IMR-90 (cell line): ENCODE measurements at regions of chr6 and their contacts with region 1.

Region 1: DNA sequence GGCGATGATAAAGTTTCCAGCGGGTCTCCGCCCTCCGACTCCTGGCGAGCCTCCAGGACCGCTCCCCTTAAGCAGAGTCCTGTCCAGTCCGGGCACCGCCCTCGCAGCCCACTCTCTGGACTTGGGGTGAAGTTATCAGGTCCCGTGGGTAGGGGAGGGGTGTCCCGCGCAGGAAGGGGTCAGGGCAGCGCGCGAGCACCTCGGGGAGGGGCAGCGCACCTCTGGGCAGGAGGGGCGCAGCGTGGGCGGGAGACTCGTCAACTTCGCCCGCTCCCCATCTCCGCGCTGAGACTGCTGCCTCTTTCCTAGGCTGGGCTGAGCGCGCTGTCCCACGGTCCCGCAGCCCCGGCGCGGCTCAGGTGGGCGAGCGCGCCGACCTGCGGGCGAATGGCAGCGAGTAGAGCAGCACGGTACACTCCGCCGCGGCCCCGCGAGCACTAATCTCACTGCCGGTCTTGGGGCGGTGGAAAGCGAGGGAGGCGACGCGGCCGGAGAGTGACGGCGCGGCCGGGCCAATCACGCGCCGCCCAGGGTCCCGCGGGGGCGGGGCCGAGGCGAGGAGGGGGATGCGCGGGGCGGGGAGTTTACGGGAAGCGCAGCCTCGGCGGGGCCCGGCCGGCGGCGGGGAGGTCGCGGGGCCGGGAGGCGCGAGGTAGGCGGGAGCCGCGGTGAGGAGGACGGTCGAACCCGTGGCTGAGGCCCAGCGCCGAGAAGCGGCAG is at the start of gene MAN1A1:
- DNase-seq: peak; percentile 66
- ATAC-seq: peak; percentile 94
- H3K4me3 ChIP-seq: peak within 1 kb of the TSS; percentile 98
- H3K27ac ChIP-seq: peak within 1 kb of the TSS; percentile 75
- H3K4me1 ChIP-seq: peaks cover 5% of the 10 kb centered on the region; the same call in 1 of the 2 replicates
- H3K27me3 ChIP-seq: no peaks in the 10 kb centered on the region
- CTCF ChIP-seq: no peak
- POLR2A ChIP-seq: peak; percentile 57; the same call in 1 of the 2 replicates
- RAD21 ChIP-seq: no peak
- total RNA-seq, gene MAN1A1: 5.9 and 11.4 TPM in 2 replicates

Region 2: DNA sequence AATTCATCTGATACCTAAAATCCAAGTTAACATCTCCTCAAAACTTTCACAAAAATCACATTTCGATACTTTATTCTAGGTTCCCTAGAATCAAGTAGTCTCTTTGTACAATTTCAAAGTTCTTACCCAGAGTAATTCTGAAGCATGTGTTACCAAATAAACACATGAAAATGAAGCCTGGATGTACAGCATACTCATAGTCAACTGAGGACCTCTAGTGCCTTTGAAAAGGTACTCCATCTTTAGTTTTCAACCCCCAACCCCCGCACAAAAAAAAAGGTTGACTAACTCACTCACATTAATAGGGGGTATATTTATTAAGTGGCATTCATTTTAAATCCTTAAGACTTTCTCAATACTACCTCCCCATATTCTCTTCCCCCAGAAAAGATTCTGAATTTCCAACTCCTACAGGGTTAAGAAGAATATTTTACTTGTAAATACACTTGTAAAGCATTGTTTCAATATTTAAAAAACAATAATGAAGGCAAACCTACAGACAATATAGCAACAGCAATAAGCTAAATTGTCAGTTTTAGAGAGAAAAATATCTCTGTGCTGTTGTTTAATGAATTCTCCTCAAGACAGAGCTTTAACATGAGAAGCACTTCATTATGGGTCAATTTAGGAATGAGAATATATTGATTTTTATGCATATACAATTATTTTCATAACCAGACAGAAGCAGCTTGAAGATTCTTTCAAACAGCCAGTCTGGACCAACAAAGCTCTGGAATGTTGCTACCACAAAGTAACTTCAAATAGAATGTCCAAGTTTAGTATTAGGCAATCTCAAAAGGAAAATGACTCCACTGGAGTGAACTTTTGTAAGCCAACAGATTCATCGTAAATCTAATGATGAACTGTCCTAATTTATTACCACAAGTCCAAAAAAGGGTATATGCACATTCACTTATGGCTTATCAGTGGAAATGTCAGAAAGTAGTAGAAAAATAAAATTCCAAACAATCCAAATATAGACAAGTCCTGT is 798.1 kb before region 1 on chr6:
- CTCF ChIA-PET with region 1: no interaction called
- POLR2A ChIA-PET with region 1: no interaction called
- dilution Hi-C with region 1: no loop called
- in situ Hi-C with region 1: no loop called
- intact Hi-C with region 1: no loop called
- DNase-seq: peak; percentile 79
- ATAC-seq: peak; percentile 84
- H3K4me3 ChIP-seq: no peak overlapping the region
- H3K27ac ChIP-seq: no peak overlapping the region
- H3K4me1 ChIP-seq: peaks cover 3% of the 10 kb centered on the region
- H3K27me3 ChIP-seq: no peaks in the 10 kb centered on the region
- CTCF ChIP-seq: peak; percentile 80
- POLR2A ChIP-seq: no peak
- RAD21 ChIP-seq: peak; percentile 81

Region 3: DNA sequence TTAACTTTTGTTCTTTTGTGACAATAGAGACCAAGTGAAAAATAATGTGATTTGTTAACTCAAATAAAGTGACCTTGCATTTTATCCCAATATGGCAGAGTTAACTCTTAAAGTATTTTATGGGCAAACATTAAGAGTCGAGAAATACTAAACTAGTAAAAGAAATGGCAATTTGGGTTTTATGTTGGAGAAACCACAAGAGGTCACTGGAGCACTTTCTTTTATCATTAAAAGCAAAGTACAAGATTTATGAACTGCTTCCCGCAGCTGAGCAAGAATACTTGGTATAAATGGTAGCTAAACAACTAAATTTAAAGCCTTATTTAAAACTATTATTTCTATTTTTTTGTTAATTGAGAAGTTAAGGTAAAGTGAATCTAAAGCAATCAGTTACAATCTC is 381.1 kb before region 1 on chr6:
- CTCF ChIA-PET with region 1: no interaction called
- POLR2A ChIA-PET with region 1: no interaction called
- dilution Hi-C with region 1: no loop called
- in situ Hi-C with region 1: no loop called
- intact Hi-C with region 1: loop called (anchors 5 kb)
- DNase-seq: peak; percentile 1
- ATAC-seq: no peak
- H3K4me3 ChIP-seq: no peak overlapping the region
- H3K27ac ChIP-seq: no peak overlapping the region
- H3K4me1 ChIP-seq: no peaks in the 10 kb centered on the region
- H3K27me3 ChIP-seq: no peaks in the 10 kb centered on the region
- CTCF ChIP-seq: peak; percentile 14; the same call in 1 of the 2 replicates
- POLR2A ChIP-seq: no peak
- RAD21 ChIP-seq: no peak

Region 4: DNA sequence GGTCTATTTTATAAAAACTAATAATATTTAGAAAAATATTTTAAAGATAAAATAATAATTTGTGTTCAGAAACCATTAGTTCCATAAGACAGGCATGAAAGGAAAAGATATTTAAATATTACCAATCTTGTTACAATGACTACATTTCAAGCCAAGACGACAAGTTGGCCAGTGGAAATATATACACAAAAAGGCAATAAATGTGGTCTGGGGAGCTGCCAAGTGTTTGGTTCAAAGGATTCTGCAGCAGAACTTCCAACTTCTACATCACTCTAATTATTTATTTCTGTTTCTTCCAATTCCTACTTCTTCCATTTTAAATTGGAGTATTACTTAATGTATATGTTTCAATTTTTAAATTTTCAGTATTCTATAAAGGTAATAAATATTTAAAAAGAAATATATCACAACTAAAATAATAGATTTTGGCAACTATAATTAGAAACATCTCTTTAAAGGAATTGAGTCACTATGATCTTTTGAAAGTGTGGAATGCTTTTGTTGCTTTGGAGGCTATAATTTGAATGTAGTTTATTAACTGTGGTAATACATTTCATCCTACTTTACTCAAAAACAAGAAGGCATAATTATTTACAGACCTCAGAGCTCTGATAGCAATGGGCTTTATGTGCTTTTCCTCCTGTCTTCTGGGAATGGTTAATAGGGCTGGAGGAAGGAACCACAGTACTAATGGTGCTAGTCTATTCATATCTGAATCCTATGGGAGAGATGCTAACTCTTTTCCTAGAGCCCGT is 141.3 kb before region 1 on chr6:
- CTCF ChIA-PET with region 1: no interaction called
- POLR2A ChIA-PET with region 1: no interaction called
- dilution Hi-C with region 1: no loop called
- in situ Hi-C with region 1: no loop called
- intact Hi-C with region 1: loop called (anchors 1 kb)
- DNase-seq: peak; percentile 66
- ATAC-seq: no peak
- H3K4me3 ChIP-seq: no peak overlapping the region
- H3K27ac ChIP-seq: no peak overlapping the region
- H3K4me1 ChIP-seq: peaks cover 3% of the 10 kb centered on the region; the same call in 1 of the 2 replicates
- H3K27me3 ChIP-seq: no peaks in the 10 kb centered on the region
- CTCF ChIP-seq: no peak
- POLR2A ChIP-seq: no peak
- RAD21 ChIP-seq: no peak

Region 5: GRCh38 chr6:119280668-119281067 is 68.8 kb before region 1 on chr6:
- CTCF ChIA-PET with region 1: no interaction called
- POLR2A ChIA-PET with region 1: no interaction called
- dilution Hi-C with region 1: no loop called
- in situ Hi-C with region 1: no loop called
- intact Hi-C with region 1: no loop called
- DNase-seq: no peak
- ATAC-seq: no peak
- H3K4me3 ChIP-seq: no peak overlapping the region
- H3K27ac ChIP-seq: no peak overlapping the region
- H3K4me1 ChIP-seq: no peaks in the 10 kb centered on the region; the same call in 1 of the 2 replicates
- H3K27me3 ChIP-seq: no peaks in the 10 kb centered on the region
- CTCF ChIP-seq: no peak
- POLR2A ChIP-seq: no peak
- RAD21 ChIP-seq: no peak

Region 6: GRCh38 chr6:119463081-119463626 is 113.7 kb after region 1 on chr6:
- CTCF ChIA-PET with region 1: no interaction called
- POLR2A ChIA-PET with region 1: no interaction called
- dilution Hi-C with region 1: no loop called
- in situ Hi-C with region 1: no loop called
- intact Hi-C with region 1: no loop called
- DNase-seq: no peak
- ATAC-seq: no peak
- H3K4me3 ChIP-seq: no peak overlapping the region
- H3K27ac ChIP-seq: no peak overlapping the region
- H3K4me1 ChIP-seq: no peaks in the 10 kb centered on the region
- H3K27me3 ChIP-seq: no peaks in the 10 kb centered on the region
- CTCF ChIP-seq: no peak
- POLR2A ChIP-seq: no peak
- RAD21 ChIP-seq: no peak

Region 7: DNA sequence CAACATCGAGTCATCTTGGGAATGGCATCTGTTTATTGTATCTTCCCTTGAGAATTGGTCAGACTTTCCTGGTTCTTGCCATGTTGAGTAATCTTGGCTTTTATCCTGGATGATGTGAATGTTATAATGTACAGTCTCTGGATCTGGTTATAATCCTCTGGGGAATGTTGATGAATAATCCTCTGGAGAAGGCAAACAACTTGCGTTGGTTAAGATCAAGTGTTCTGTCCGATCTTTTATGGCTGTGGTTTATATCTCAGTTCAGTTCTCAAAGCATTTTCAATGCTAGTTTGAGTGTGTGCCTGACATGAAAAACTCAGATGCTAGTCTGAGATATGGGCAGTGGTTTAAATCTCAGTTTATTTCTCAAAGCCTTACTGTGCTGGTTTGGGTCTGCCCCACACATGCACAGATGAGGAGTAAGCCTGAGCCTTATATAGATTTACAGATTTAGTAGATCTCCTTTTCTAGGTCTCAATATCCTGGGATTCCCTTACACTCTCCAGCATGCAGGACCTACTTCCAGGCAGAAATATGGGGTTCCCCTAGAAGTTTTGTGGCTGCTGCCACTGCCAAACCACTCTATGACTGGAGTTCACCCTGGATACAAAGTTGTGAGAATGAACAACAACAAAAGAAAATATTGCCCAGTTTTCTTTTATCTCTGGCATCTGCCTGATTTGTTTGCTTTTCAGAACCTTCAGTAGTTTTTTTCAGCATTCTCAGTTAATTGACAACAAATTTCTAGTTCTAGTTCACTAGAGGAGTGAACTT is 191.8 kb after region 1 on chr6:
- CTCF ChIA-PET with region 1: no interaction called
- POLR2A ChIA-PET with region 1: no interaction called
- dilution Hi-C with region 1: no loop called
- in situ Hi-C with region 1: no loop called
- intact Hi-C with region 1: loop called (anchors 5 kb)
- DNase-seq: peak; percentile 100
- ATAC-seq: peak; percentile 93
- H3K4me3 ChIP-seq: no peak overlapping the region
- H3K27ac ChIP-seq: peak overlapping the region; percentile 85
- H3K4me1 ChIP-seq: peaks cover 14% of the 10 kb centered on the region
- H3K27me3 ChIP-seq: no peaks in the 10 kb centered on the region
- CTCF ChIP-seq: no peak
- POLR2A ChIP-seq: no peak
- RAD21 ChIP-seq: no peak

Region 8: DNA sequence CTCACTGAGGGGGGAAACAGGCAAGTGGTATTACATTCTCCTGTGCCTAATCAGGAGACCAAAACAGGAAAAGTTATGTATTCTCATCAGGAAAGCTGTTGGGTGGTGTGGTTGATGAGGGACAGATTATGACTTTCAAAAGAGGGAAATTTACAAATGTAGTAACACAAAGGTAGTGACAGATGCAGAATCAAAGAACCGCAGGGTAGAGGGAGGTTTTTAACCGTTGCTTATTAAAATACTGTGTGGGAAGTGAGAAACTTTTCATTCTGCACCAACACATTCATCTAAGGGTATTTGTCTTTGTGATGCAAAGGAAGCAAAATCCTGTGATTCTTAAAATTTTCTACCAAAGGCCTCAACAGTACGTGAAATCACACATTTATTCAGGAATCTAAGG is 288.3 kb after region 1 on chr6:
- CTCF ChIA-PET with region 1: no interaction called
- POLR2A ChIA-PET with region 1: no interaction called
- dilution Hi-C with region 1: no loop called
- in situ Hi-C with region 1: no loop called
- intact Hi-C with region 1: no loop called
- DNase-seq: no peak
- ATAC-seq: no peak
- H3K4me3 ChIP-seq: no peak overlapping the region
- H3K27ac ChIP-seq: no peak overlapping the region
- H3K4me1 ChIP-seq: no peaks in the 10 kb centered on the region
- H3K27me3 ChIP-seq: no peaks in the 10 kb centered on the region
- CTCF ChIP-seq: no peak
- POLR2A ChIP-seq: no peak
- RAD21 ChIP-seq: no peak

Region 9: DNA sequence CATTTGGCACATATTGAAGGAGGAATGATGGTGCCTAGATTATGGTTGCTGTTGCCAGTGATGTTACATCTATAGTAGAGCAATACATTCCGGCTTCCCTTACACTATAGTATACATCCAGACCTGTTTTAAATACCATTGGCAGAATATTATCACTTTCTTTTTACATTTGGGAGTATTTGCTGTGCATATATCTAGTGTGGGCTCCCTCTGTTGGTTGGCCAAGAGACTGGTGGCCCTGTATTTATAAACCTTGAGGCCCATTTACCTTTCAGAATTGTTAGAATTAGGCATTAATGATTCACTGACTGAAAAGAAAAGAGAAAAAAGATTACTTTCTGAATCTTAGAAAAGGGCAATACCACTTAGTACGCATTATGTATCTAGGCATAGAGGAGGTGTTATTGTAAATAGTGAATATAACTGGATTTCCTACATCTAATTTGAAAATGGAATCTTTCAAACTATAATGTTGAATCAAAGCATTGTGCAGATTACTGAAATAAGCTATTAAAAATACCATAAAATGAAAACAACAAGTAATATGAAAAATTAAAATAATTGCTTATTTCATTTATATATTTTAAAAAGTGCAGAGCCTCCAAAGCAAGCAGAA is 628.9 kb after region 1 on chr6:
- CTCF ChIA-PET with region 1: interaction called, 5 read pairs
- POLR2A ChIA-PET with region 1: no interaction called
- dilution Hi-C with region 1: no loop called
- in situ Hi-C with region 1: no loop called
- intact Hi-C with region 1: loop called (anchors 1 kb)
- DNase-seq: peak; percentile 26
- ATAC-seq: peak; percentile 48; the same call in 1 of the 2 replicates
- H3K4me3 ChIP-seq: no peak overlapping the region
- H3K27ac ChIP-seq: no peak overlapping the region
- H3K4me1 ChIP-seq: no peaks in the 10 kb centered on the region
- H3K27me3 ChIP-seq: no peaks in the 10 kb centered on the region
- CTCF ChIP-seq: peak; percentile 56
- POLR2A ChIP-seq: no peak
- RAD21 ChIP-seq: peak; percentile 47

Region 10: DNA sequence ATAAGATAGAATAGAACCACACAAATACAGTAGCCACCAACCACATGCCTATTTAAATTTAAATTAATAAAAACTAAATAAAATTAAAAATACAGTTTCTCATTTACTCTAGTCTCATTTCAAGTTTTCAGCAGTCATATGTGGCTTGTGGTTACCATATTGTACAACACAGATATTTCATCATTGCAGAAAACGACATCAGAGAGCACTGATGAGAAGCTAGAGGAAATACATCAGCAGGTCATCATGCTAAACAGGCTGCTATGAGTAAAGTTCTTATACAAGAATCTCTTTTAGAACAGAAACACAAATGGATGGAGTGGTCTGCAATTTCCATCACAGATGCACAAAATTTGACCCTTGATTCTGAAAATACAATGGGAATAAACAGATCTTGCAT is 1948.2 kb after region 1 on chr6:
- CTCF ChIA-PET with region 1: no interaction called
- POLR2A ChIA-PET with region 1: no interaction called
- dilution Hi-C with region 1: no loop called
- in situ Hi-C with region 1: no loop called
- intact Hi-C with region 1: loop called (anchors 5 kb)
- DNase-seq: peak; percentile 48
- ATAC-seq: no peak
- H3K4me3 ChIP-seq: no peak overlapping the region
- H3K27ac ChIP-seq: no peak overlapping the region
- H3K4me1 ChIP-seq: no peaks in the 10 kb centered on the region
- H3K27me3 ChIP-seq: no peaks in the 10 kb centered on the region
- CTCF ChIP-seq: no peak
- POLR2A ChIP-seq: no peak
- RAD21 ChIP-seq: no peak